A549 (cell line): ENCODE measurements at regions of chr6 and their contacts with region 1.

Region 1: GRCh38 chr6:49606696-49607390 is 29.8 kb downstream of the RHAG start:
- DNase-seq: peak; percentile 41 to 86
- ATAC-seq: peak; percentile 84
- H3K4me3 ChIP-seq: peak overlapping the region; percentile 15; the same call in 1 of the 3 replicates
- H3K27ac ChIP-seq: peak overlapping the region; percentile 50 to 59; a peak in 5 of 6 replicates
- H3K4me1 ChIP-seq: peaks cover 25% of the 10 kb centered on the region
- CTCF ChIP-seq: peak; percentile 78
- EP300 ChIP-seq: no peak
- POLR2A ChIP-seq: no peak
- RAD21 ChIP-seq: peak; percentile 80 to 81

Region 2: DNA sequence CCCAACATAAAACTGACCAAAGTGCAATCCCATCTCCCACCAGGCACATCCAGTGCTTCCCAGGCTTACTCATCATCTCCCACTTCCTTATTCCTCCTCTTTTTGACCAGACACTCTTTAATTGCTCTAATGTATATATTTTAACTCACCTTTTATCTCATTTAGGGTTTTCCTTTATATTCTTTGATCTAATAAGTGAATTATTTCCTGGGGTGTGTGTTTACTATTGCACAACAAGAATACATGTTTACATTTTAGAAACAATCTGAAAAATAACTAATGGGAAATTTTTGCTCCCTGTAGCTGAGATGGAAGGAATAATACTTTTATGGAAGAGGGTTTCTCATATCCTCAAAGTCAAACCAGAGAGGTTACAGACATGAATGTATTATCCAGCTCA is 11.4 kb after region 1 on chr6:
- CTCF ChIA-PET with region 1: interaction called, 21 read pairs
- POLR2A ChIA-PET with region 1: no interaction called
- DNase-seq: no peak
- ATAC-seq: 0 out of 6 replicates have a peak, but pooled peaks of 1 of the 2 experiments have one; percentile 33
- H3K4me3 ChIP-seq: no peak overlapping the region
- H3K27ac ChIP-seq: no peak overlapping the region
- H3K4me1 ChIP-seq: no peaks in the 10 kb centered on the region
- CTCF ChIP-seq: no peak
- EP300 ChIP-seq: no peak
- POLR2A ChIP-seq: no peak
- RAD21 ChIP-seq: no peak

Region 3: DNA sequence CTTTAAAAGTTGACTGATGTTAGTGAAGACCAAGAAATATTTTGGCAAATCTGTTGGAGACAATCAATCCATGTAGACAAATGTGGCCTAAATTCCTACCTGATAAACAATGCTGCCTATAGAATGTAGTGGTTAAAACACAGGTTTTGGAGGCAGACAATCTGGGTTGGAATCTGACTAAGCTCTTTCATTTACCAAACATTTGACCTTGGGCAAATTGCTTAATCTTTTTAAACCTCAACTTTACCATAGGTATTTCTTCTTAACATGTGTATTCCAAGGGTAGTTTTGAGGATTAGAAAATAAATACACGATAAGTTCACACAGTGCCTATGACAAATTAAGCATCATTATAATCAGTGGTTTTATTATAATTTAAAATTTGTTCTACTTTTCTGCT is 18.3 kb after region 1 on chr6:
- CTCF ChIA-PET with region 1: interaction called, 21 read pairs
- POLR2A ChIA-PET with region 1: no interaction called
- DNase-seq: no peak
- ATAC-seq: no peak
- H3K4me3 ChIP-seq: no peak overlapping the region
- H3K27ac ChIP-seq: no peak overlapping the region
- H3K4me1 ChIP-seq: no peaks in the 10 kb centered on the region
- CTCF ChIP-seq: no peak
- EP300 ChIP-seq: no peak
- POLR2A ChIP-seq: no peak
- RAD21 ChIP-seq: no peak